ENCODE measurements at regions of chr1 and their contacts with region 1.

Region 1: DNA sequence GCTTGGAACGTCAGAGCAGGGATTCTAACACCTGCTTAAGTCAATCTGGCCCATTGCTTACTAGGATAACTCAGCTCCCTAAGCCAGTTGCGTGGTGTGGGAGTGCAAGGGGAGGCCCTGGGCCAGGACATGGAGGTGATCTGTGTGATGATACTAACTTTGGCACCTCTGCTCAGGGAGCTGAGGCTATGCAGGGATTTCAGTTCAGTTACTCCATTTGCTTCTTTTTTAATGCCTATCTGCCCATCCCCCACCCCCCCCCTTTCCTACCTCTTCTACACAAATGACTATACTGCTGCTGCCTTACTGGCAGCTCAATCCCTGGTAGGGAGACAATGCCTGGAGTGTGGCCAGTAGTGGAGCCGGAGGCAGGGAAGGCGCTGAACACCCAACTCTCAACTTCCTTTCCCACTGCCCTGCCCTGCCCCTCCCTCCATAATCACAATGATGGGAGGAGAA is 19.5 kb downstream of the INKA2 start:
- DNase-seq: no peak
- H3K4me3 ChIP-seq: no peak overlapping the region
- H3K4me3 Mint-ChIP-seq: no peak overlapping the region
- H3K27ac ChIP-seq: peak overlapping the region in 1 of 2 donors; percentile 63
- H3K27ac Mint-ChIP-seq: peak overlapping the region in 1 of 7 donors; percentile 87
- H3K4me1 ChIP-seq: peaks cover 12 to 26% of the 10 kb centered on the region in 2 donors
- H3K4me1 Mint-ChIP-seq: peaks cover 35% of the 10 kb centered on the region
- H3K27me3 ChIP-seq: no peaks in the 10 kb centered on the region
- H3K27me3 Mint-ChIP-seq: peaks cover 0 to 6% (median 1%) of the 10 kb centered on the region in 3 donors
- CTCF ChIP-seq: no peak

Region 2: GRCh38 chr1:111747282-111747734 is 27.6 kb after region 1 on chr1:
- intact Hi-C with region 1: loop called (anchors 2 to 5 kb)
- DNase-seq: peak; percentile 74 to 89 (median 82)
- H3K4me3 ChIP-seq: no peak overlapping the region
- H3K4me3 Mint-ChIP-seq: no peak overlapping the region
- H3K27ac ChIP-seq: no peak overlapping the region
- H3K27ac Mint-ChIP-seq: peak overlapping the region in 2 of 7 donors; percentile 28 to 79
- H3K4me1 ChIP-seq: peaks cover 7 to 9% of the 10 kb centered on the region in 2 donors
- H3K4me1 Mint-ChIP-seq: peaks cover 12% of the 10 kb centered on the region
- H3K27me3 ChIP-seq: peaks cover 8 to 13% of the 10 kb centered on the region in 2 donors
- H3K27me3 Mint-ChIP-seq: peaks cover 13 to 14% (median 14%) of the 10 kb centered on the region in 3 donors
- CTCF ChIP-seq: peak; percentile 82

Region 3: GRCh38 chr1:111755331-111756123 is 35.8 kb after region 1 on chr1 and contains the start of gene DDX20:
- intact Hi-C with region 1: loop called in 1 of 2 experiments (anchors 5 kb)
- DNase-seq: peak; percentile 94 to 96 (median 96)
- H3K4me3 ChIP-seq: peak within 1 kb of the TSS; percentile 75 to 96 (median 85)
- H3K4me3 Mint-ChIP-seq: peak within 1 kb of the TSS; percentile 86 to 96
- H3K27ac ChIP-seq: peak within 1 kb of the TSS; percentile 88 to 98
- H3K27ac Mint-ChIP-seq: peak within 1 kb of the TSS; percentile 97 to 100 (median 99)
- H3K4me1 ChIP-seq: peaks cover 27 to 30% of the 10 kb centered on the region in 2 donors
- H3K4me1 Mint-ChIP-seq: peaks cover 35% of the 10 kb centered on the region
- H3K27me3 ChIP-seq: no peaks in the 10 kb centered on the region
- H3K27me3 Mint-ChIP-seq: peaks cover 0 to 2% (median 1%) of the 10 kb centered on the region in 3 donors
- CTCF ChIP-seq: peak; percentile 84
- polyA plus RNA-seq, gene DDX20: 3.1 to 4.1 (median 4.0) TPM

Region 4: GRCh38 chr1:111769517-111770146 is 49.9 kb after region 1 on chr1:
- intact Hi-C with region 1: loop called in 1 of 2 experiments (anchors 5 kb)
- DNase-seq: peak; percentile 50 to 76 (median 69)
- H3K4me3 ChIP-seq: no peak overlapping the region
- H3K4me3 Mint-ChIP-seq: no peak overlapping the region
- H3K27ac ChIP-seq: no peak overlapping the region
- H3K27ac Mint-ChIP-seq: no peak overlapping the region
- H3K4me1 ChIP-seq: no peaks in the 10 kb centered on the region
- H3K4me1 Mint-ChIP-seq: peaks cover 3% of the 10 kb centered on the region
- H3K27me3 ChIP-seq: no peaks in the 10 kb centered on the region
- H3K27me3 Mint-ChIP-seq: no peaks in the 10 kb centered on the region
- CTCF ChIP-seq: peak; percentile 79